OCI-LY7 (cell line): ENCODE measurements at regions of chr4 and their contacts with region 1.

Region 1: DNA sequence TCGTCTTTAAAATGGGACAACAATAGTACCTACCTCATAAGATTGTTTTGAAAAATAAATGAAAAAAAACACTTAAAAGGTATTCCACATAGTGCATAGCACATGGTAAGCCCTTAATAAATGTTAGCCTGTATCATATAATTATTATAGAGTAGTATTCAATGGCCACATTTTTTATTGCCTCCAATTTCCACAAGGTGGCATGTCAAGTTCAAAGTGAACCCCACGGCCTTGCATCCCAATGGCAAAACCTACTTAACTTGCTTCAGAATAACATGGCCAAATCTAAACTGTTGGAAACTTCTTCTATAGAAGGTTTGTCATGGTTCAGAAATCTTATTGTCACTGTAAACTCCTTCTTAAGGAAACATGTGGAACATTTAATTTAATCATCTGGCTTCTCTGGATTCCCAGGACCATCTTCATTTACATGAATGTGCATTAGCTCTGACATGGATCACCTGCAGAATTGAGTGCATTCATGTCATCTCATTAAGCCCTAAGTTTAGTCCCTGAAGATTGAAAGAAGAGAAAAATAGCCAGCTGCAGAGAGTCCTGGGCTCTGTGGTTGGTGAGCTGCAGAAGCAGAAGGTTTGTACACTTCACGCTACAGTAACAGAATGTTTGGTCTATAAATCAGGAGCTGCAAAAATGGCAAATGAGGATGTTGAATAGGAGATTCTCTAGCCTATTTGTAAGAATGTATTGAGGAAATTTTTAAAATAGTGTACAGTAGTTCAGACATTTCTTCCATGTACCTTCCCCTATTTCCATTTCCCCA is 61.0 kb downstream of the ANXA3 start:
- DNase-seq: peak; percentile 82
- H3K4me3 ChIP-seq: no peak overlapping the region
- H3K27ac ChIP-seq: no peak overlapping the region
- H3K4me1 ChIP-seq: peaks cover 46% of the 10 kb centered on the region
- CTCF ChIP-seq: peak; percentile 97

Region 2: GRCh38 chr4:78629991-78630541 is 17.5 kb after region 1 on chr4:
- CTCF ChIA-PET with region 1: no interaction called
- POLR2A ChIA-PET with region 1: interaction called, 47 read pairs
- intact Hi-C with region 1: no loop called
- DNase-seq: no peak
- H3K4me3 ChIP-seq: peak overlapping the region; percentile 22
- H3K27ac ChIP-seq: no peak overlapping the region
- H3K4me1 ChIP-seq: peaks cover 19% of the 10 kb centered on the region
- CTCF ChIP-seq: no peak

Region 3: DNA sequence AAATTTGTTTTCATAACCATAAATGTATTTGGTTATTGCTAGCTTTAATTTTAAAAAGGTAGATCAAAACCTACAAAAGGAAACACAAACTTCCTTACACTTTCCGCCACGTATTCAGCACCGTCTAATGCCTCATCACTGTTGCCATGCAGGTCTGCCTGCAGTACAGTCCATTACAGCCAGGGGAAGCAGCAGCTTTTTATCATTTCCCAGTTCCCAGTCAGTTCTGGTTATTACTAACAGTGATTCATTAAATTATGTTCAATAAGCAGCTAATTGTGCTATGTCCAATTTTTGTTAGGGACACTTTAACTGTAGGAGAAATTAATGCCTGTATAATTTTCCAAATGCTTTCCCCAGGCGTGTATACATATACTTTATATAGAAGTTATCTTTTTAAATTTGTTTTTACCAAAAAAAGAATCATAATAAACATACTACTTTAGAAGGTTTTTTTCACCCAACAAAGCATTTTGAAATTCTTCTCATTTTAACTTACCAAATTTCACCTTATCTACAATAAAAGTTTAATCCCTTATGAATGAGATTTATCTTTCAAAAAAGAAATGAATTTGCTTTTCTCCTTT is 32.2 kb after region 1 on chr4:
- CTCF ChIA-PET with region 1: no interaction called
- POLR2A ChIA-PET with region 1: interaction called, 5 read pairs
- intact Hi-C with region 1: loop called (anchors 2 kb)
- DNase-seq: peak; percentile 65
- H3K4me3 ChIP-seq: no peak overlapping the region
- H3K27ac ChIP-seq: no peak overlapping the region
- H3K4me1 ChIP-seq: no peaks in the 10 kb centered on the region
- CTCF ChIP-seq: peak; percentile 85

Region 4: GRCh38 chr4:78704981-78705683 is 92.5 kb after region 1 on chr4:
- CTCF ChIA-PET with region 1: no interaction called
- POLR2A ChIA-PET with region 1: interaction called, 3 read pairs
- intact Hi-C with region 1: loop called (anchors 5 kb)
- DNase-seq: no peak
- H3K4me3 ChIP-seq: no peak overlapping the region
- H3K27ac ChIP-seq: no peak overlapping the region
- H3K4me1 ChIP-seq: peaks cover 29% of the 10 kb centered on the region
- CTCF ChIP-seq: no peak

Region 5: DNA sequence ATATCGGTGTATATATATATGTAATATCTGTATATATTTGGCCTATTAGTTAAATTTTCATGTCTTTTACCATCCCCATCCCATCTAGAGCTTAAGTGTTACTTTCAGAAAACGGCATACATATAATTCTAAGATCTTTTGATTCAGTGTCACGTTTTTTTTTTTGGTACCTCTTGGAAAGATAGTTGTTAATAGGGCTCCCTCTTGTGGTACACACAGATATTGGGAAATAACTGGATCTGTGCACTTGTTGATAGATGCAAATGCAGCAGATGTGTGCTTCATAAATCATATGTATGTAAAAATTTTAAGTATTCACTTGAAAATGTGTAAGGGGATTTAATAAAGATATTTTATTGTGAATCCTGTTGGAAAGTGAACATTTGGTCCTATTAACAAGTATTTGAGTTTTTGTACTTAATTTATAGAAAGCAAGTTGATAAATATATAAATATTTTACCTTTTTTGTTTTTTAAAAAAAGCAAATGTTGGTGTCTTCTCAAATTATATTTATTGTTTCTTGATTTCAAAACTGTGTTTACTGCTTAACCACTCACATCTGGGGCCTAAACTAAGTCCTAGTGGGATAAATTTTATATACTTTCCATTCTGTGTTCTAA is 251.9 kb after region 1 on chr4:
- CTCF ChIA-PET with region 1: interaction called, 7 read pairs
- POLR2A ChIA-PET with region 1: interaction called, 7 read pairs
- intact Hi-C with region 1: loop called (anchors 1 kb)
- DNase-seq: peak; percentile 86
- H3K4me3 ChIP-seq: no peak overlapping the region
- H3K27ac ChIP-seq: no peak overlapping the region
- H3K4me1 ChIP-seq: no peaks in the 10 kb centered on the region
- CTCF ChIP-seq: peak; percentile 96